MCF 10A (cell line): ENCODE measurements at regions of chr18 and their contacts with region 1.

Region 1: DNA sequence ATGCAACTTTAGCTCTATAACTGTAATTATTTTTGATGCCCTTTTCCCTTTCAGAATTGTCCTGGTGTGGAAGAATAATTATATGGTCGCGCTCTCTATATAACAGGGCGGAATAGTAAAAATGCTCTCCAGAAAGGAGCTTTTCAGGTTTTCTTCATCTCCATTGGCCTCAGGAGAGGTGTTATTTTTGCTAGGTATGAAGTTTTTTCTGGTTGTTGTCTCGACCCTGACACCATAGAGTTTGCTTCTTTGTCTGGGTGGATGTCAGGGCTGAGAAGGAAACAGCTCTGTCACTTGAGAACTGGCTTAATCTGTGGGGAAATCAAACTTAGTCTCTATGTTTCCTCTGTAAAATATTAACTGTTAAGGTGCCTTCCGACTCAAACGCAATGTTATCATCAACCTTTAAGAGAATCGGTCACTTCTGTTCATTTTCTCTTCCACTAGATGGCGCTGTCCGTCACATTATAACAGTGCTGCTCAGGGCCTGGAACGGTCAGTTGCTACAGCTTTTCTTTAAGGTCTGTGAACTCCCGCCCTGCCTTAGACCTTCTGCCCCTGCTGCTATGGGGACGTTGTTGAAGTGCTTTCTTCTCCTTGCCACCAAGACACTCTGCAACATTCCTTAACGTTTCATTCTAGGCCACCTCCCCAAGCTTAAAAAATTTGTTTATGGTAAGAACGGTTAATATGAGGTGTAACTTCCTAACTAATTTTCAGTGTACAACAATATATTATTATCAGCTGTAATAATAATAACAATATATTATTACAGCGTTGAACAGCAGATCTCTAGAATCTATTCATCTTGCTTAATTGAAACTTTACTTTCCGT is 23.8 kb upstream of the SERPINB12 start:
- DNase-seq: peak; percentile 89
- H3K4me3 Mint-ChIP-seq: no peak overlapping the region
- H3K27ac Mint-ChIP-seq: no peak overlapping the region
- H3K4me1 Mint-ChIP-seq: peaks cover 12% of the 10 kb centered on the region
- H3K27me3 Mint-ChIP-seq: no peaks in the 10 kb centered on the region
- CTCF ChIP-seq: peak; percentile 55

Region 2: GRCh38 chr18:63545000-63545399 is 26.6 kb after region 1 on chr18:
- CTCF ChIA-PET with region 1: interaction called, 21 read pairs
- POLR2A ChIA-PET with region 1: interaction called, 4 read pairs
- intact Hi-C with region 1: no loop called
- DNase-seq: no peak
- H3K4me3 Mint-ChIP-seq: no peak overlapping the region
- H3K27ac Mint-ChIP-seq: no peak overlapping the region
- H3K4me1 Mint-ChIP-seq: peaks cover 4% of the 10 kb centered on the region
- H3K27me3 Mint-ChIP-seq: no peaks in the 10 kb centered on the region
- CTCF ChIP-seq: no peak

Region 3: DNA sequence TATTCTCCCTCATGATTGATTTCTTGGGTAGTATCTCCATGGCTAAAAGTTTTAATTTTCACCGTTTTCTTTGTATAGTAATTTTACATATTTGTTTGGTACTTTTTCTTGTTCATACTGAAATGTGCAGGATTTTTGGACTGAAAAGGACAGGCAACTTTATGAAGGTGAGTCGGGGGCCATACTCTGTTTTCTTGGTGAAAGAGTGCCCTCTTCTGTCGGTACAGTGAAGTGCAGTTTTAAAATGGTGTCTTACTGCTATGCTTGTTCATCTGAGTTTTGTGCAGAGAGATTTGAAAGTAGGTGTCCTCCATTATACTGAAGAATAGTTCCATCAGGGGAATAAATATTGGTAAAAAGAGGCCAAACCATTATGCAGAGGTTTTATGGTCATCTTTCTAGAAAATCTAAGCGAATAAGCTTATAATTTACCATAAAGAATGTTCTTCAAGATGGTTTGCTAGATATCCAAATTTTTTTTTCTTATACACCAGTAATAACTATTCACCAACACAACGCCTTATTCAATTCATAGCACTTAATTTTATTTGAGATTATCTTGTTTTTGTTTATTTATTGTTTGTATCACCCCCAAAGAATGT is 60.1 kb after region 1 on chr18:
- CTCF ChIA-PET with region 1: interaction called, 535 read pairs
- POLR2A ChIA-PET with region 1: interaction called, 56 read pairs
- intact Hi-C with region 1: loop called (anchors 1 kb)
- DNase-seq: peak; percentile 67
- H3K4me3 Mint-ChIP-seq: no peak overlapping the region
- H3K27ac Mint-ChIP-seq: no peak overlapping the region
- H3K4me1 Mint-ChIP-seq: peaks cover 15% of the 10 kb centered on the region
- H3K27me3 Mint-ChIP-seq: no peaks in the 10 kb centered on the region
- CTCF ChIP-seq: peak; percentile 75

Region 4: GRCh38 chr18:63683152-63683551 is 164.8 kb after region 1 on chr18:
- CTCF ChIA-PET with region 1: interaction called, 21 read pairs
- POLR2A ChIA-PET with region 1: no interaction called
- intact Hi-C with region 1: no loop called
- DNase-seq: peak; percentile 95
- H3K4me3 Mint-ChIP-seq: peak overlapping the region; percentile 65
- H3K27ac Mint-ChIP-seq: peak overlapping the region; percentile 100
- H3K4me1 Mint-ChIP-seq: peaks cover 39% of the 10 kb centered on the region
- H3K27me3 Mint-ChIP-seq: no peaks in the 10 kb centered on the region
- CTCF ChIP-seq: no peak

Region 5: GRCh38 chr18:63762518-63762917 is 244.1 kb after region 1 on chr18:
- CTCF ChIA-PET with region 1: interaction called, 10 read pairs
- POLR2A ChIA-PET with region 1: no interaction called
- intact Hi-C with region 1: no loop called
- DNase-seq: peak; percentile 64
- H3K4me3 Mint-ChIP-seq: no peak overlapping the region
- H3K27ac Mint-ChIP-seq: peak overlapping the region; percentile 10
- H3K4me1 Mint-ChIP-seq: peaks cover 15% of the 10 kb centered on the region
- H3K27me3 Mint-ChIP-seq: no peaks in the 10 kb centered on the region
- CTCF ChIP-seq: no peak

Region 6: DNA sequence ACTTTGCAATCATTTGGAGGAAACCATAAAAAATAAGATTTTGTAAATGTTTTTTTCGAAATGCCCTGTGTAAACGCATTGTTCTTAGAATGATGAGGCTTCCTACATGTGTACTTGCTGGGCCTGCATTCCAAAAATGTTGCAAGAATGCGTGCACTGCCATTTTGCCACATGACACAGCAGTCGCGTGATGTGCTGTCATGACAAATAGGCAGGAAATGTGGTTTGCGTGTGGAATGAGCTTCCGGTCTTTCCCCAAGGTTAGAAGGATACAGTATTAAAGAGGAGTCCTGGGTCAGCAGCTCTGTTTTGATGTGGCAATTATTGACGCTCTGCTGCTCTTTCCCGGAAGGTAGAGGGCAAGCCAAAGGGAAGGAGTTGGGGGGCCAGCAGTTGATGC is 351.0 kb after region 1 on chr18:
- CTCF ChIA-PET with region 1: interaction called, 11 read pairs
- POLR2A ChIA-PET with region 1: no interaction called
- intact Hi-C with region 1: no loop called
- DNase-seq: peak; percentile 73
- H3K4me3 Mint-ChIP-seq: peak overlapping the region; percentile 10
- H3K27ac Mint-ChIP-seq: peak overlapping the region; percentile 95
- H3K4me1 Mint-ChIP-seq: peaks cover 32% of the 10 kb centered on the region
- H3K27me3 Mint-ChIP-seq: no peaks in the 10 kb centered on the region
- CTCF ChIP-seq: no peak